ENCODE measurements at regions of chr2 and their contacts with region 1.

Region 1: GRCh38 chr2:26785431-26786206 is at the start of gene CENPA:
- DNase-seq: peak; percentile 95 to 98 (median 97)
- ATAC-seq: peak; percentile 98 to 100 (median 100)
- H3K4me3 ChIP-seq: peak within 1 kb of the TSS; percentile 53 to 86 (median 70)
- H3K27ac ChIP-seq: peak within 1 kb of the TSS in 5 of 12 donors; percentile 8 to 60 (median 46)
- H3K4me1 ChIP-seq: peaks cover 0 to 25% (median 7%) of the 10 kb centered on the region in 12 donors
- H3K27me3 ChIP-seq: no peaks in the 10 kb centered on the region
- CTCF ChIP-seq: peak in 11 of 12 donors; percentile 17 to 70 (median 43)
- POLR2A ChIP-seq: peak in 1 of 2 donors; percentile 52
- total RNA-seq, gene CENPA: 0.35 to 26.8 (median 4.4) TPM in 8 of 9 donors, not detected in the other

Region 2: DNA sequence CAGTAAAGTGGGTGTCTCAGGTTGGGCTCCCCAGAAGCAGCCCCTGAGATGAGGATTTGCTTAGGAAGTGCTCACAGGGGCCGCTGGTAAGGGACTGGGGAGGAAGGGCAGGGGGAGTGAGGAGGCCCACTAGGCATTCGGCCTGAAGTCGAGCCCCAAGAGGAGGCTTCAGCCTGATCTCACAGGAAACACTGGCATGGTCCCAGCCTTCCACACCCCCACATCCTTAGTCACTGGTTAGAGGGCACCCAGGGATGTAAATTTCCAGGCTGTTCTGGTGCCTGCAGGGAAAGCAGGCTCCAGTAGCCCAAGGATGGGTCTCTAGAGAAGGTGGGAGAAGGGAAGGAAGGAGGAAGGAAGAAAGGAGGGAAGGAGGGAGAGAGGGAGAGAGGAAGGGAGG is 115.4 kb before region 1 on chr2:
- intact Hi-C with region 1: no loop called
- DNase-seq: no peak
- ATAC-seq: no peak
- H3K4me3 ChIP-seq: no peak overlapping the region
- H3K27ac ChIP-seq: no peak overlapping the region
- H3K4me1 ChIP-seq: no peaks in the 10 kb centered on the region
- H3K27me3 ChIP-seq: peaks cover 0 to 14% (median 5%) of the 10 kb centered on the region in 9 donors
- CTCF ChIP-seq: no peak
- POLR2A ChIP-seq: no peak

Region 3: GRCh38 chr2:26772064-26773001 is 13.3 kb before region 1 on chr2:
- intact Hi-C with region 1: loop called in 1 of 10 experiments (anchors 1 kb)
- DNase-seq: peak; percentile 92 to 98 (median 95)
- ATAC-seq: peak; percentile 92 to 94 (median 92)
- H3K4me3 ChIP-seq: no peak overlapping the region
- H3K27ac ChIP-seq: peak overlapping the region; percentile 73 to 93 (median 86)
- H3K4me1 ChIP-seq: peaks cover 20 to 72% (median 50%) of the 10 kb centered on the region in 12 donors
- H3K27me3 ChIP-seq: no peaks in the 10 kb centered on the region
- CTCF ChIP-seq: no peak
- POLR2A ChIP-seq: peak in 1 of 2 donors; percentile 50